Activated CD4-positive, alpha-beta memory T cell treated with anti-CD3 and anti-CD28 coated beads for 36 hours (primary cell): ENCODE measurements at regions of chr6 and their contacts with region 1.

Region 1: GRCh38 chr6:100381111-100381510 is 83.6 kb downstream of the SIM1 start:
- DNase-seq: no peak
- H3K4me3 Mint-ChIP-seq: no peak overlapping the region
- H3K27ac Mint-ChIP-seq: no peak overlapping the region
- H3K4me1 Mint-ChIP-seq: no peaks in the 10 kb centered on the region
- H3K27me3 Mint-ChIP-seq: no peaks in the 10 kb centered on the region

Region 2: DNA sequence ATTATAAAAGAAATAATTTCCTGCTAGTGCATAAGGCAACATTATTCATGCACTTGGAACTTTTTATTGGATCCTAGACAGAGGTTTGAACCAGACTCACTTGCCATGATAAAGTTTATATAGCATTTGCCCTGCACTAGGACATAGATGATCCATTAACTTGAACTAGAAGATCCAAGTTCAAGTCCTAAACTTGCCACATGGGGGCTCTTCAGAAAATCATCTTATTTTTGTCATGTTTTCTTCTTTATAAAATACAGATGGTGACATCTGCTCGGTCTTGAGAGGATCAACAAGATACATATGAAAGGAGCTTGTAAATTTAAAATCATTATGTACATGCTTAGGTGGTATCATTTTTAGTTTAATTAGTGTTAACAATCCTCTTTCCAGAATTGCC is 10.8 kb before region 1 on chr6:
- CTCF ChIA-PET with region 1: no interaction called
- POLR2A ChIA-PET with region 1: no interaction called
- intact Hi-C with region 1: loop called (anchors 2 kb)
- DNase-seq: no peak
- H3K4me3 Mint-ChIP-seq: no peak overlapping the region
- H3K27ac Mint-ChIP-seq: no peak overlapping the region
- H3K4me1 Mint-ChIP-seq: no peaks in the 10 kb centered on the region
- H3K27me3 Mint-ChIP-seq: no peaks in the 10 kb centered on the region